ENCODE measurements at regions of chr22 and their contacts with region 1.

Region 1: GRCh38 chr22:17785185-17786184 is 11.2 kb upstream of the BID start:
- DNase-seq: peak; percentile 63 to 85
- ATAC-seq: peak; percentile 34 to 40
- H3K4me3 ChIP-seq: no peak overlapping the region
- H3K27ac ChIP-seq: peak overlapping the region; percentile 85 to 94 (median 90)
- H3K4me1 ChIP-seq: peaks cover 22 to 29% of the 10 kb centered on the region in 2 donors
- H3K27me3 ChIP-seq: no peaks in the 10 kb centered on the region
- CTCF ChIP-seq: peak; percentile 50 to 85 (median 68)
- POLR2A ChIP-seq: no peak

Region 2: GRCh38 chr22:17570851-17571641 is 214.4 kb before region 1 on chr22:
- in situ Hi-C with region 1: no loop called
- intact Hi-C with region 1: loop called (anchors 2 kb)
- DNase-seq: peak; percentile 92 to 95
- ATAC-seq: peak; percentile 93 to 95
- H3K4me3 ChIP-seq: peak overlapping the region; percentile 30 to 47 (median 40)
- H3K27ac ChIP-seq: peak overlapping the region; percentile 87 to 98 (median 96)
- H3K4me1 ChIP-seq: peaks cover 27 to 31% of the 10 kb centered on the region in 2 donors
- H3K27me3 ChIP-seq: no peaks in the 10 kb centered on the region
- CTCF ChIP-seq: no peak
- POLR2A ChIP-seq: peak; percentile 76 to 79

Region 3: GRCh38 chr22:17628304-17629166 is 156.9 kb before region 1 on chr22 and contains the start of gene ATP6V1E1:
- in situ Hi-C with region 1: no loop called
- intact Hi-C with region 1: loop called (anchors 5 kb)
- DNase-seq: peak; percentile 97 to 98
- ATAC-seq: peak; percentile 96 to 98
- H3K4me3 ChIP-seq: peak within 1 kb of the TSS; percentile 90 to 100 (median 94)
- H3K27ac ChIP-seq: peak within 1 kb of the TSS; percentile 94 to 99 (median 98)
- H3K4me1 ChIP-seq: peaks cover 17 to 27% of the 10 kb centered on the region in 2 donors
- H3K27me3 ChIP-seq: no peaks in the 10 kb centered on the region
- CTCF ChIP-seq: no peak
- POLR2A ChIP-seq: peak; percentile 90 to 93
- total RNA-seq, gene ATP6V1E1: 243 to 279 (median 250) TPM

Region 4: GRCh38 chr22:17638432-17639246 is 146.8 kb before region 1 on chr22 and contains the start of gene BCL2L13:
- in situ Hi-C with region 1: no loop called
- intact Hi-C with region 1: loop called (anchors 2 kb)
- DNase-seq: peak; percentile 89 to 92
- ATAC-seq: peak; percentile 85 to 86
- H3K4me3 ChIP-seq: peak within 1 kb of the TSS; percentile 66 to 95 (median 83)
- H3K27ac ChIP-seq: peak within 1 kb of the TSS; percentile 92 to 100 (median 98)
- H3K4me1 ChIP-seq: peaks cover 15 to 19% of the 10 kb centered on the region in 2 donors
- H3K27me3 ChIP-seq: no peaks in the 10 kb centered on the region
- CTCF ChIP-seq: peak in 2 of 5 experiments; percentile 10 to 14
- POLR2A ChIP-seq: peak; percentile 95 to 99
- total RNA-seq, gene BCL2L13: 162 to 310 (median 231) TPM

Region 5: GRCh38 chr22:17742527-17742902 is 43.0 kb before region 1 on chr22:
- in situ Hi-C with region 1: no loop called
- intact Hi-C with region 1: loop called (anchors 1 kb)
- DNase-seq: peak; percentile 23 to 68
- ATAC-seq: peak; percentile 48 to 65
- H3K4me3 ChIP-seq: no peak overlapping the region
- H3K27ac ChIP-seq: no peak overlapping the region
- H3K4me1 ChIP-seq: peaks cover 5 to 6% of the 10 kb centered on the region in 2 donors
- H3K27me3 ChIP-seq: no peaks in the 10 kb centered on the region
- CTCF ChIP-seq: peak; percentile 55 to 84 (median 76)
- POLR2A ChIP-seq: no peak

Region 6: GRCh38 chr22:17807578-17808360 is 22.3 kb after region 1 on chr22:
- in situ Hi-C with region 1: no loop called
- intact Hi-C with region 1: loop called (anchors 2 kb)
- DNase-seq: peak; percentile 66 to 86
- ATAC-seq: peak; percentile 84 to 85
- H3K4me3 ChIP-seq: no peak overlapping the region
- H3K27ac ChIP-seq: peak overlapping the region; percentile 77 to 85 (median 82)
- H3K4me1 ChIP-seq: peaks cover 21 to 22% of the 10 kb centered on the region in 2 donors
- H3K27me3 ChIP-seq: no peaks in the 10 kb centered on the region
- CTCF ChIP-seq: no peak
- POLR2A ChIP-seq: no peak